Body of pancreas (tissue), 4 donors: ENCODE measurements at regions of chr14 and their contacts with region 1.

Region 1: DNA sequence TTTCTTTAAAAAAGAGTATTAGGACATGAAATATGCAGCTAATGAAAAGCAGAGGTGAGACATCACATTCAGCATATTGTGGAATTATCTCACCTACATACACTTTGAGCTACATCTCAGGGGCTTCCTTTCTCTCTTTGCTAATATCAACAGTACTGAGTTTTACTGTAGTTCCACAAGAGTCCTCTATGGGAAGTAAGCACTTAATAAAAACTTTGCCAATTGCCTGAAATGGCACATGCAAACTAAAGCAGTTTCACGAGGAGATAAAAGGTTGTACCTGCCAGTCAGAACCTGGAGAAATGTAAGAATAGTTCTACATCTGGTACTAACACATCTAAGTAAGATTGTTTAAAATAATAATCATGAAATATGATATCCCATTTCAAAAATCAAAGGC is 73.5 kb upstream of the GPHB5 start:
- DNase-seq: no peak
- ATAC-seq: no peak
- H3K4me3 ChIP-seq: no peak overlapping the region
- H3K27ac ChIP-seq: no peak overlapping the region
- H3K4me1 ChIP-seq: peaks cover 6% of the 10 kb centered on the region
- H3K27me3 ChIP-seq: no peaks in the 10 kb centered on the region
- CTCF ChIP-seq: peak in 1 of 7 experiments; percentile 5
- POLR2A ChIP-seq: no peak

Region 2: DNA sequence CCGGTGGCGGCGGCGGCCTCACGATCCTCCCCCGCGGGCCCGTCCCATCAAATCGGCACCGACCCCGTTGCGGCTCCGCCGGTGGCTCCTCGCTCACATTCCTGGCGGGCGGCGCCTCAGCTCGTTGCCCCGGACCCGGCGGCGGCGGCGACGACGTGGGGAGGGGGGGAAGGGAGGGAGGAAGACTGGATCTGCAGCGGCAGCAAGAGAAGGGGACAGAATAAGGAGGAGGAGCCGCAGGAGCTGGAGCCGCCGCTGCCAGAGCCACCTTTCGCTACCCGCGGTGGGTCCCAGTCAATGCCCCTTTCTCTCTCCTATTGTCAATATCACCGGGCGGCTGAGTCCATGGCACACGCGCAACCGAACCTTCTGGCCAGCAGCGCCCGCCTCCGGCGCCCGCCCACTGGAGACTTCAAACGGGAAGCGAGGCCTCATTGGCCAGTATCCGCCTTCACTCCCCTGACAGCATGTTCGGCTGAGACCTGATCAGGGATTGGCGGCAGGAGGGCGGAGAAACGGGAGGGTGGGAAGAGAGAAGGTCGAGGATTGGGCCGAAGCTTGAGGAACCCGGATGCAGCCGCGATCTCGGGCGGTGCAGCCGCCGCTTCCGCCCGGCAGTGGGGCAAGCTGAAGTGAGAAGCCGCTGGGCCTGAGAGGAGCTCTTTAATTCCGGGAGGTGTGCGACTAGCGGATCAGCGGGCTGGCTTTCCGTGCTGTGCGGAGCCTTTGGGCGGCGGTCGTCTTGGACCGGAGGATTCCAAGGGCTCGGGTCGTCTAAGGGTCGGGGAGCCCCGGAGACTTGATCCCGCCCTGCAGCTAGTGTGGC is 151.0 kb after region 1 on chr14 and contains the start of gene PPP2R5E:
- intact Hi-C with region 1: loop called (anchors 10 kb)
- DNase-seq: peak; percentile 97 to 99 (median 98)
- ATAC-seq: peak; percentile 99
- H3K4me3 ChIP-seq: peak within 1 kb of the TSS; percentile 66 to 94
- H3K27ac ChIP-seq: peak within 1 kb of the TSS; percentile 74 to 95 (median 93)
- H3K4me1 ChIP-seq: peaks cover 28% of the 10 kb centered on the region
- H3K27me3 ChIP-seq: no peaks in the 10 kb centered on the region
- CTCF ChIP-seq: peak in 1 of 7 experiments; percentile 10
- POLR2A ChIP-seq: peak; percentile 54 to 93 (median 92)
- total RNA-seq, gene PPP2R5E: 9.2 to 12.5 TPM

Region 3: GRCh38 chr14:63760014-63760413 is 367.8 kb after region 1 on chr14:
- intact Hi-C with region 1: loop called (anchors 10 kb)
- DNase-seq: no peak
- ATAC-seq: no peak
- H3K4me3 ChIP-seq: no peak overlapping the region
- H3K27ac ChIP-seq: no peak overlapping the region
- H3K4me1 ChIP-seq: no peaks in the 10 kb centered on the region
- H3K27me3 ChIP-seq: no peaks in the 10 kb centered on the region
- CTCF ChIP-seq: no peak
- POLR2A ChIP-seq: no peak